Posterior vena cava (tissue), 2 donors: ENCODE measurements at regions of chr4 and their contacts with region 1.

Region 1: GRCh38 chr4:152448038-152448707 is 87.7 kb downstream of the FBXW7 start:
- DNase-seq: no peak

Region 2: DNA sequence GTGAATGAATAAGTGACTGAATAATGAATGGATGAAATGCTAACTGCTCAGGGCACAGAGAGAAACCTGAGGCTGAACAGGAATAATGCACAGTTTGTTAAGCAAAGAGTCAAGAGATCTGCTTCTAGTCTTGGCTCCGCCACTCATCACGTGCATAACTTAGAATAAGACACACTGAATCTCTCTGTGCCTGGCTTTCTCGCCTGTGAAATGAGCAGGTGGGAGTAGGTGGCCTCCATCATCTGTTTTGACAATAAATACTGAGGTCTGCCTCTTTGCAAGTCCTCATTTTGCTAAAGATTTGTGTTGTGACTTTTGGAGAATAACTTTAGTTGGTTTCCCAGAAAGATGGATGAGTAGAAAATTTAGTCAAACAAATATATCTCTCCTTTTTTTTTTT is 230.3 kb before region 1 on chr4:
- intact Hi-C with region 1: loop called in 1 of 2 experiments (anchors 5 kb)
- DNase-seq: no peak